ENCODE measurements at regions of chr3 and their contacts with region 1.

Region 1: GRCh38 chr3:28467414-28467813 is 118.8 kb upstream of the AZI2 start:
- DNase-seq: no peak
- H3K4me3 ChIP-seq: no peak overlapping the region
- H3K27ac ChIP-seq: no peak overlapping the region
- H3K4me1 ChIP-seq: no peaks in the 10 kb centered on the region
- H3K27me3 ChIP-seq: no peaks in the 10 kb centered on the region
- CTCF ChIP-seq: no peak

Region 2: DNA sequence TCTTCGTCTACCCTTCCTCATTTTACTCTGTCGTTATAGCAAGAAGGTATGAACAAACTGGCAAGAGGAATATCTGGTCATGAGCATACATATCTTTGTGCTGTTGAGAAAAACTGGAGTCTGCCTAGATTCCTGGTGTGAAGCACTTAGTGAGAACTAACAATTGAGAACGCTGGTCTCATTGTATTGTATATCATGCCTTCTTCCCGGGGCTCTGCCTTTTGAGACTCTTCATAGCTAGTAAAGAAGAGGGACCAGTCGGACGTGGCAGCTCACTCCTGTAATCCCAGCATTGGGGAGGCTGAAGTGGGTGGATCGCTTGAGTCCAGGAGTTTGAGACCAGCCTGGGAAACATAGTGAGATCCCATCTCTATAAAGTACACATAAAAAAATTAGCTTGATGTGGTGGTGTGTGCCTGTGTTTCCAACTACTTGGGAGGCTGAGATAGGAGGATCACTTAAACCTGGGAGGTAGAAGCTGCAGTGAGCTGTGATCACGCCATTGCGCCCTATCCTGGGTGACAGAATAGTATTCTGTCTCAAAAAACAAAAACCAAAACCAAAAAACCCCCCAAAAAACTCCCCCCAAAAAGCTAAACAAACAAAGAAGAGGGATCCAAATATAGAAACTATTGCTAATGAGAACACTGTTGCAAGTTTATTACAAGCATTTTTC is 214.2 kb before region 1 on chr3:
- CTCF ChIA-PET with region 1: no interaction called
- POLR2A ChIA-PET with region 1: no interaction called
- intact Hi-C with region 1: no loop called
- DNase-seq: no peak
- H3K4me3 ChIP-seq: no peak overlapping the region
- H3K27ac ChIP-seq: no peak overlapping the region
- H3K4me1 ChIP-seq: no peaks in the 10 kb centered on the region
- H3K27me3 ChIP-seq: no peaks in the 10 kb centered on the region
- CTCF ChIP-seq: no peak

Region 3: GRCh38 chr3:29531644-29532043 is 1064.2 kb after region 1 on chr3:
- CTCF ChIA-PET with region 1: no interaction called
- POLR2A ChIA-PET with region 1: no interaction called
- intact Hi-C with region 1: no loop called
- DNase-seq: no peak
- H3K4me3 ChIP-seq: no peak overlapping the region
- H3K27ac ChIP-seq: no peak overlapping the region
- H3K4me1 ChIP-seq: no peaks in the 10 kb centered on the region
- H3K27me3 ChIP-seq: no peaks in the 10 kb centered on the region
- CTCF ChIP-seq: no peak

Region 4: GRCh38 chr3:29775340-29775739 is 1307.9 kb after region 1 on chr3:
- CTCF ChIA-PET with region 1: no interaction called
- POLR2A ChIA-PET with region 1: no interaction called
- intact Hi-C with region 1: loop called (anchors 10 kb)
- DNase-seq: no peak
- H3K4me3 ChIP-seq: no peak overlapping the region
- H3K27ac ChIP-seq: no peak overlapping the region
- H3K4me1 ChIP-seq: no peaks in the 10 kb centered on the region
- H3K27me3 ChIP-seq: no peaks in the 10 kb centered on the region
- CTCF ChIP-seq: no peak